Calu3 (cell line): ENCODE measurements at regions of chr19 and their contacts with region 1.

Region 1: GRCh38 chr19:19537075-19538048 is 703 bp upstream of the CILP2 start:
- DNase-seq: no peak
- H3K4me3 Mint-ChIP-seq: peak overlapping the region; percentile 56
- H3K27ac Mint-ChIP-seq: no peak overlapping the region
- H3K4me1 Mint-ChIP-seq: peaks cover 10% of the 10 kb centered on the region
- H3K27me3 Mint-ChIP-seq: peaks cover 12% of the 10 kb centered on the region
- CTCF ChIP-seq: no peak

Region 2: GRCh38 chr19:19547674-19548336 is 10.4 kb after region 1 on chr19:
- CTCF ChIA-PET with region 1: interaction called, 12 read pairs
- intact Hi-C with region 1: no loop called
- DNase-seq: no peak
- H3K4me3 Mint-ChIP-seq: no peak overlapping the region
- H3K27ac Mint-ChIP-seq: no peak overlapping the region
- H3K4me1 Mint-ChIP-seq: no peaks in the 10 kb centered on the region
- H3K27me3 Mint-ChIP-seq: peaks cover 14% of the 10 kb centered on the region
- CTCF ChIP-seq: no peak